ENCODE measurements at regions of chr1 and their contacts with region 1.

Region 1: GRCh38 chr1:42681741-42682483 is at the start of gene YBX1:
- DNase-seq: peak; percentile 93
- H3K4me3 Mint-ChIP-seq: peak within 1 kb of the TSS; percentile 97
- H3K27ac Mint-ChIP-seq: peak within 1 kb of the TSS; percentile 94
- H3K4me1 Mint-ChIP-seq: peaks cover 57% of the 10 kb centered on the region
- H3K27me3 Mint-ChIP-seq: no peaks in the 10 kb centered on the region
- total RNA-seq, gene YBX1: 774 and 780 TPM in 2 replicates

Region 2: DNA sequence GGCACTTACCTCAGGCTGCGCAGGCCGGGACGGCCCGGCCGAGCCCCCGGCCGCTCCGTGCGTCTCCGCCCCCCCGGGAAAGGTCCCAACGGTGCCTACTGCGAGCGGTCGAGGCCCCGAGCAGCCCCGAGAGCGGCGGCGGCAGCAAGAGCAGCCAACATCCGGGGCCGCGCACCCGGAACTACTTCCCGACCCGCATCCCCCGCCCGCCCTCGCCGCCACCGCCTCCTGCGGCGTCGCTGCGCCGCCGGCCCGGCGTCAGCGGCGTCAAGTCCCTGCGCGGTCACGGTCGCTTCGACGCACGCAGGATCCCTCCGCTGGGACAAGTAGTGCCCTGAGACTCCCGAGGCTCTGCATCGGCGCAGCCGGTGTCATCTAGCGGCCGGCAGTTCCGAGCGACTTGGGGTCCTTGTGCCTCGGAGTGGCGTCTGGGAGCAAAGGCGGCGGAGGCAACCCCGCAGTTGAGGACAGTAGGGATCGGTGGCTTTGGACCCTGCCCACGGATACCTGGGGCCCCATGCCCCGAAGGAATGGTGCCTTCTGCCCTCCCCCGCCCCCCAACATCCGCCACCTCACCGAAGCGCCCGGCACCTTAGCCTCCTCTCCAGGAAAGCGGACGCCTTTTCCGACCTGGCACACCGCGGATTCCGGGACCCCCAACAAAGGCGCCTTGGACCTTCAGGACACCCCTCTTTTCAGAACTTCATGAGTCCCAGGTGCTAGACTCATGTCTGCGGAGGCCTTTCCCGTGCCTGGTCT is 346.7 kb before region 1 on chr1 and contains the start of gene FOXJ3:
- intact Hi-C with region 1: loop called (anchors 2 kb)
- DNase-seq: peak; percentile 87
- H3K4me3 Mint-ChIP-seq: peak within 1 kb of the TSS; percentile 90
- H3K27ac Mint-ChIP-seq: peak within 1 kb of the TSS; percentile 91
- H3K4me1 Mint-ChIP-seq: peaks cover 47% of the 10 kb centered on the region
- H3K27me3 Mint-ChIP-seq: no peaks in the 10 kb centered on the region
- total RNA-seq, gene FOXJ3: 50.1 and 51.6 TPM in 2 replicates

Region 3: DNA sequence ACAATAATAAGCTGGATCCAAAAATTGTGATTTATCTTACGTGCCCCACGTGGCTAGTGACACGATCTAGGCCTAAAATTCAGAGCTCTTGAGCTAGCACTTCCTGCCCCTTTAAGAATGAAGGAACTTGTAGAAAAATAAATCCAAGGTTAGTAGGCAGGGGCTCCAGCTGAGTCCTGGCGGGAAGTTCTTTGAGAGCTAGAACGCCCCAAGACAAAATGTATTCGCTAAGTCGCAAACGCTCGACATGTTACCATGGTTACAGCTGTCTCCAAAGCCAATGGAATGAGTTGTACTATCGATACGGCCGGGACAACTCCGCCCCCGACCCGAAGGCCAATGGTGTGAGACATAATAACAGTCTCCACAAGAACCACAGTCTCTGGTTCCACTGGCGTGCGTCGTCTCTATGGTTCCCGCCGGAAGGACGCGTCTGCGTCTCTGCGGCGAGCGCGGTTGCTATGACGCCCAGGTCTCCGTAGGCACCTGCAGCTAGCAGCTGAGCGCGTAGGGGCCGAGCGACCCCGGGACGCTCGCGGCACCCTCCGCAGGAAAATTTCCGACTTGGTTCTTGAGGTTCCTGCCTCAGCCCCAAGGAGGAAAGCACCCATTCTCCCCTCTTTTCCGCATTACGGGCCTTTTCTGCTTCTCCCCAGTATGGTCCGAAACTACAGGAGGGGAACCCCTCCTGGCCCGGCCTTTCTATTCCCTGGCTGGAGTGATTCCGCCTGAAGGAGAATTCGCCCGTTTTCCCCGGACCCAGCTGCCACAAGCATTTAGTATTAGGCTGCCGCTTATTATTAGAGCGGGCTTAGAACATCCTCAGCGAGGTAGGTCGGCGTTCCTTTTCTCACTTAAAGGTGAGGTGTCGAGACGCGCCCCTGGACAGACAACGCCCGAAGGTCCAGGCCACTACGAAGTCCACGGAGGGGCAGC is 218.8 kb before region 1 on chr1 and contains the start of gene CCDC30:
- intact Hi-C with region 1: loop called (anchors 1 kb)
- DNase-seq: peak; percentile 96
- H3K4me3 Mint-ChIP-seq: peak within 1 kb of the TSS; percentile 81
- H3K27ac Mint-ChIP-seq: peak within 1 kb of the TSS; percentile 70
- H3K4me1 Mint-ChIP-seq: peaks cover 31% of the 10 kb centered on the region
- H3K27me3 Mint-ChIP-seq: peaks cover 9% of the 10 kb centered on the region
- total RNA-seq, gene CCDC30: 1.0 and 1.9 TPM in 2 replicates

Region 4: DNA sequence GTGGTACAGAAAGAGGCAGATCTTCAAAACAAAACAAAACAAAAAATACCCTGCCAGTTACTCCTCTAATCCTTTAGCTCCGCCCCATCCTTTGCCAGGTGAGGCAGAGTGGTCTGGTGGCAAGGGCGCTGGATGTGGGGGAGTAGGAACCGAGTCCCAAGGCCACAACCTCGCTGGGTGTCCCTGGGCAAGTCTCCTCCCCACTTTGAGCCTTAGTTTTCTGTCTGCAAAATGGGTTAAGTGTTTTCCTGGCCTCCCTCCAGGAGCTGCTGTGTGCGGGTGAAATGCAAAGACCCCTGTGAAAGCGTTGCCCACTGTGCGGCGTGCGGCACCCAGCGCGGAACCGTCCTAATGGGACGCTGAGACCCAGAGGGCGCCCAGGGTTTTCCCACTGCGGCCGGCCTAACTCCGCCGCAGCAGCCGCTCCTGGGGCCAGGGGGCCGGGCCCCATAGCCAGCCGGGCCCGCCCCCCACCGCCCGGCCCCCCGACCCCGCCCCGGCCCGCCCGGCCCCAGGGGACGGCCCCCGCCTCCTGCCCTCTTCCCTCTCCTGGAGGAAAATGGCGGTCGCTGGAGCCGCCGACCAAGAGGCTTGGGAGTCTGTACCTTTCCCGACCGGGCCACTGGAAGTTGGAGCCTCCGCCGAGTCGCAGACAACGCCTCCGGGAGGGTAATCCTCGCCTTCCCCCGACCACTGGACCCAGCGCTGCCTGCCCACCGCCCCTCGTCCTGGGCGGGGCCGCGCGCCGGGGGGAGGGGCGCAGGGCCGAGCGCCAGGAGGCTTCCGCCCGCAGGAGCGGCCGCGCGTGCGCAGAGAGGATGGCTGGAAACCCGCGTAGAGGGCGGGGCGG is 134.9 kb after region 1 on chr1 and contains the starts of genes ERMAP and SVBP:
- intact Hi-C with region 1: loop called (anchors 2 kb)
- DNase-seq: peak; percentile 90
- H3K4me3 Mint-ChIP-seq: peak within 1 kb of the TSS; percentile 79
- H3K27ac Mint-ChIP-seq: peak within 1 kb of the TSS; percentile 80
- H3K4me1 Mint-ChIP-seq: peaks cover 19% of the 10 kb centered on the region
- H3K27me3 Mint-ChIP-seq: no peaks in the 10 kb centered on the region
- total RNA-seq, gene ERMAP: 3.4 and 3.7 TPM in 2 replicates
- total RNA-seq, gene SVBP: 6.4 and 8.2 TPM in 2 replicates

Region 5: GRCh38 chr1:42924082-42924850 is 242.4 kb after region 1 on chr1:
- intact Hi-C with region 1: loop called (anchors 5 kb)
- DNase-seq: peak; percentile 91
- H3K4me3 Mint-ChIP-seq: peak overlapping the region; percentile 90
- H3K27ac Mint-ChIP-seq: peak overlapping the region; percentile 96
- H3K4me1 Mint-ChIP-seq: peaks cover 50% of the 10 kb centered on the region
- H3K27me3 Mint-ChIP-seq: no peaks in the 10 kb centered on the region

Region 6: DNA sequence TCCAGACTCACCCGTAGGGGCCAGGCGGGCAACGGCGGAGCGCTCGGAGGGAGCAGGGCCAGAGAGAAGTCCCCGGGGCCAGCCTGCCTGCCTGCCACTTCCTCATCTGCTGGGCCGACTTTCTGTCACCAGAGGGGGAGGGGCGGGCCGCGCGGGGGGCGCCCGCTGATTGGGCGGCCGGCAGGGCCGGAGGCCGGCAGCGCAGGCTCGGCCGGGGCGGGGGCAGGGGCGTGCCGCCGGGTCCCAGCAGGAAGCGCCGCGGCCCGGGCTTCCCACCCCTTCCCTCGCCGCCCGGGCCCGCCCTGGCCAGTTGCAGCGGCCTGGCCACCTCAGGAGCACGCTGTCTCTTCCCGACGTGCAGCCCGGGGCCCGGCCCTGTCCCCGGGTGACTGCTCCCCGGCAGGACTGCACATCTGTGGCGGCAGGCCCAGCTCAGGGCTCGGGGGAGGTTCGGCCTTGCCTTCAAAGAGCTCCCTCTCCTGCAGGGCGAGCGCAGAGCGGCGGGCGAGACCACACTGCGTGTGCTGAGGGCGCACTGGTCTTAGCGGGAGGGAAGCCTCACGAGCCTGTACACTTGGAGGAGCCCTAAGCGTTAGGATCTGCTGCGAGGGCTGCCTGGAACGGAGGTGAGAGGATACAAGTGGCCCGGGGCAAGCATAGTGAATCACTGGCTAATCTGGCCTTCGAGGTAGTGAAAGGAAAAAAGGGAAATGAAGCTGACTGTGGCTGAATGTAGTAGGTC is 686.2 kb after region 1 on chr1 and contains the start of gene ELOVL1:
- intact Hi-C with region 1: loop called (anchors 5 kb)
- DNase-seq: peak; percentile 85
- H3K4me3 Mint-ChIP-seq: peak within 1 kb of the TSS; percentile 92
- H3K27ac Mint-ChIP-seq: peak within 1 kb of the TSS; percentile 86
- H3K4me1 Mint-ChIP-seq: peaks cover 43% of the 10 kb centered on the region
- H3K27me3 Mint-ChIP-seq: no peaks in the 10 kb centered on the region
- total RNA-seq, gene ELOVL1: 81.8 and 85.7 TPM in 2 replicates

Region 7: DNA sequence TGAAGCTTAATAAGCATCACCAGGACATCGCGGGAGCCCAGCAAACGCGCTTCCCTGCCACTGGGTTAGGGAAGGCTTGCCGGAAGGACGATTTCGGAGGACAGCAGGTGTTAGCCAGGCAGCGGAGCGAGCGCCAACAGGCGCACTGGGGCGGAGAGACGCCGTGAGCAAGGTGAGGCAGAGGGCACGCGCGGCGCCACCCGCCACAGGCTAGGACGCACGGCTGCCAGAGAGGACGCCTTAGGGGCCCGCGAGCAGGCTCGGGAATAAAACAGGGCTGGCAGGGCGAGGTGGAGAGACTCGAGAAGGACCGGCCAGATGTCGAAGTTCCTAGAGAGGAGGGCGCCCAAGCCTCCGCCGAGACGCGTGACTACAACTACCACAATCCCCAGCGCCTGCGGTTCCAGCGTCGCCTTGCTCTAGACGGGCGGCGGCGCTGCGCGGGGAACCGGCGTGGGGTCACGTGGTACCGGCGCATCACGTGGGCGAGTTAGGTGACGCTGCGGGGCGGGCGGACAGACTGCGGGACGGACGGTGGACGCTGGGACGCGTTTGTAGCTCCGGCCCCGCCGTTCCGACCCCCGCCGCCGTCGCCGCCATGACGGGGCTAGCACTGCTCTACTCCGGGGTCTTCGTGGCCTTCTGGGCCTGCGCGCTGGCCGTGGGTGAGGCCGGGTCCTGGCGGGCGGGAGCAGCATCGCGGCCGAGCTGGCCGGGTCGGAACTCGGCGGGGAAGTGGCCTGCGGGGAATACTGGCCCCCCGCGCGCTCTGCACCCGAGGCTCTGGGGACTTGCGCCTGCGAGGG is 1292.7 kb after region 1 on chr1 and contains the start of gene ATP6V0B:
- intact Hi-C with region 1: loop called (anchors 5 kb)
- DNase-seq: peak; percentile 94
- H3K4me3 Mint-ChIP-seq: peak within 1 kb of the TSS; percentile 85
- H3K27ac Mint-ChIP-seq: peak within 1 kb of the TSS; percentile 89
- H3K4me1 Mint-ChIP-seq: peaks cover 60% of the 10 kb centered on the region
- H3K27me3 Mint-ChIP-seq: peaks cover 1% of the 10 kb centered on the region
- total RNA-seq, gene ATP6V0B: 187 and 195 TPM in 2 replicates

Measured in activated T-helper 1 cell treated with anti-CD3 and anti-CD28 coated beads, Interleukin-12 subunit alpha, Interleukin-12 subunit beta, Interleukin-2, Interleukin-4 antibody, amounts not matched to agents 30 ng/mL and 10 ng/mL and 1 ng/mL, durations not matched to agents 14 hours and 24 hours and 36 hours (primary cell).